Tibial artery (tissue), 4 donors: ENCODE measurements at regions of chr1 and their contacts with region 1.

Region 1: DNA sequence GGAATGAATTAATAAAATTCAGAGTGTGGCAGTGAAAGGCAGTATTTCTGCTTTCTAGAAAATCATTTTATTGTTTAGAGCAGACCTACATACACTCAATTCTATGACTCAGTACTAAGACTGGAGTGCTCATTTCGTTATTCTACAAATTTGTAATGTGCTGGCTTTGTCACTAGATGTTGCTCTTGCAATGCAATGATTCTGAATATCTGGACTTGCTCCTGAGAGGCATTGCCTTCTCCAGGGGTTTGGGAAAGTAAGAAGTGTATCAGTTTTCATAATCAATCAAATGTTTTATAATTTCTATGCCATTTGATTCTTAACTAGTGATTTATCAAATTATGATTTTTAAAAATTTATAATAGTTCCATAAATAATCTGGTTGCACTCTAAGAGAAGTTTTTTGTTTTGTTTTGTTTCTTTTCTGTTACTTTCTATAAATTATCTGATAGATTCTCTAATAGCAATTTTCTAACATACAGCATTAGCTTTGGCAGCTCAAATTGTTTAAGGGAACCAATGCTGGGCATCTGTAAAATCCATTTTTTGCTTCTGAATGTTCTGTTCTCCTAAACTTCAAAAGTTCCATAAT is 280.5 kb upstream of the SGIP1 start:
- DNase-seq: no peak
- H3K4me3 ChIP-seq: no peak overlapping the region
- H3K27ac ChIP-seq: no peak overlapping the region
- H3K4me1 ChIP-seq: peaks cover 0 to 13% (median 1%) of the 10 kb centered on the region in 4 donors
- H3K27me3 ChIP-seq: no peaks in the 10 kb centered on the region
- CTCF ChIP-seq: peak; percentile 81 to 86

Region 2: GRCh38 chr1:66214901-66215300 is 38.5 kb before region 1 on chr1:
- intact Hi-C with region 1: no loop called
- DNase-seq: no peak
- H3K4me3 ChIP-seq: no peak overlapping the region
- H3K27ac ChIP-seq: no peak overlapping the region
- H3K4me1 ChIP-seq: no peaks in the 10 kb centered on the region
- H3K27me3 ChIP-seq: no peaks in the 10 kb centered on the region
- CTCF ChIP-seq: no peak

Region 3: GRCh38 chr1:66393586-66394287 is 140.3 kb after region 1 on chr1:
- intact Hi-C with region 1: no loop called
- DNase-seq: no peak
- H3K4me3 ChIP-seq: no peak overlapping the region
- H3K27ac ChIP-seq: no peak overlapping the region
- H3K4me1 ChIP-seq: peaks cover 0 to 11% (median 5%) of the 10 kb centered on the region in 4 donors
- H3K27me3 ChIP-seq: no peaks in the 10 kb centered on the region
- CTCF ChIP-seq: no peak

Region 4: DNA sequence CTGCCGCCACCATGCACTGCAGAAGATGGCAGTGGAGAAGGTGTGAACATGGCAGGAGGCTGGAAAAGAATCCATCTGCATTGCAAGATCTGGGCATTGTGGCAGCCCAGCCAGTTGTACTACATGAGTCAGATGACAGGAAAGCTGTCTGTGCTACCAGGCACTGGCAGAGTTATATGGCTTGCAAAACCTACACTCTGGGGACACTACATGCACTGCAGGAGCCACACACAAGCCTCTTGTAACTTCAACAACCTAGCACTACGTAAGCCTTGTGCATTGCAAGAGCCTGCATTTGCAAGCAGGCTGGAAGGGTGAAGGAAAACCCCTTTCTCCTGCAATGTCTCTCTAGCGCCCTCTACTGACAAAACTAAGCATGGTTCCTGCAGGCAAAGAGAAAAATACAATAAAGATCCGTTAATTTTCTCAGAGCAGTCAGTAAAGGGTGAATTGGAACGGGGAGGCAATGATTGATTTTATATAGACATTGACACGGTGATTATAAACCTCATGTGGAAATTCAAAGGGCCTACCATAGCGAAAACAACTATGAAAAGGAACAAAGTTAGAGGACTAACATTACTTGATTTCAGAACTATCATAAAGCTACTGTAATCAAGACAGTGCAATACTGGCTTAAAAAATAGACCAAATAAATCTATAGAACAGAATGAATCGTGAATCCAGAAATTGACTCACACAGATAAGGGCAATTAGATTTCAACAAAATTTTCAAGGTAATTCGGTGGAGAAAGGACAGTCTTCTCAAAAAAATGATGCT is 472.6 kb after region 1 on chr1:
- intact Hi-C with region 1: loop called (anchors 5 kb)
- DNase-seq: peak; percentile 69 to 83
- H3K4me3 ChIP-seq: no peak overlapping the region
- H3K27ac ChIP-seq: peak overlapping the region; percentile 36 to 38
- H3K4me1 ChIP-seq: peaks cover 0 to 12% (median 9%) of the 10 kb centered on the region in 4 donors
- H3K27me3 ChIP-seq: no peaks in the 10 kb centered on the region
- CTCF ChIP-seq: peak; percentile 87 to 99